Transverse colon (tissue), 4 donors: ENCODE measurements at regions of chr9 and their contacts with region 1.

Region 1: DNA sequence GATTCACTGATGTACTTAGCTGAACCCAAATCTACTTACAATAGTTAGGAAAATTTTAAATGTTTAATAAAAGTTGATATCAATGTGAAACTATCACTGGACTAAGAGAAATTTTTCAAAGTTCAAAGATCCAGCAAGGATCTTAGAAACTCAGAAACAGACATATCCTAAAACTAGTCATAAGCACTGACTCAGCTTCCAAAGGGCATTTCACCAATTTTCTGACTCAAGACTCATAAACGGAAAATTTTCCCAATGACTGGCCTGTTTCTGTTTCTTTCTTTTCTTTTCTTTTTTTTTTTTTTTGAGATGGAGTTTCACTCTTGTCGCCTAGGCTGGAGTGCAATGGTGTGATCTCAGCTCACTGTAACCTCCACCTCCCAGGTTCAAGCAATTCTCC is 66.6 kb downstream of the CDC14B start:
- DNase-seq: no peak
- H3K4me3 ChIP-seq: no peak overlapping the region
- H3K27ac ChIP-seq: peak overlapping the region in 2 of 4 donors; percentile 42 to 49
- H3K4me1 ChIP-seq: no peaks in the 10 kb centered on the region
- H3K27me3 ChIP-seq: no peaks in the 10 kb centered on the region
- CTCF ChIP-seq: no peak
- EP300 ChIP-seq: no peak
- POLR2A ChIP-seq: no peak

Region 2: DNA sequence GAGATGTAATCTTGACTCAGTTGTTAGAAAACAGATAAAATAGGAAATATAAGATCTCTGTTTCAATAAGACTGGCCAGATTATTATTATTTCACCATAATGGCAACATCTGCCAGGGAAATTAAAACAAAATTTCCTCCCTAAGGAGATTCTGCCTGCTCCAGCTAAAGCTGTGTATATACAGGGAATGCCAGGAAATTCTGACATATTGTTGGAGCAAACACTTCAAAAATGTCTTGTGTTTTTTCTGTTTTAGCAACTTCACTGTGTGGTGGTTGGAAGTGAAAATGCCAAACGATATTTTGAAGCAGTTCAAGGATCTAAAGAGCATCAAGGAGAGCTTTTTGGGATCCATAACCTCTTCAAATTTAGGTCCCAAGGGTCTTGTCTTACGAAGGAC is 586.8 kb before region 1 on chr9:
- in situ Hi-C with region 1: no loop called
- intact Hi-C with region 1: no loop called
- DNase-seq: no peak
- H3K4me3 ChIP-seq: no peak overlapping the region
- H3K27ac ChIP-seq: no peak overlapping the region
- H3K4me1 ChIP-seq: no peaks in the 10 kb centered on the region
- H3K27me3 ChIP-seq: no peaks in the 10 kb centered on the region
- CTCF ChIP-seq: no peak
- EP300 ChIP-seq: no peak
- POLR2A ChIP-seq: no peak

Region 3: GRCh38 chr9:96571681-96572080 is 18.6 kb after region 1 on chr9:
- in situ Hi-C with region 1: no loop called
- intact Hi-C with region 1: loop called (anchors 2 kb)
- DNase-seq: no peak
- H3K4me3 ChIP-seq: no peak overlapping the region
- H3K27ac ChIP-seq: no peak overlapping the region
- H3K4me1 ChIP-seq: peaks cover 0 to 10% (median 6%) of the 10 kb centered on the region in 4 donors
- H3K27me3 ChIP-seq: no peaks in the 10 kb centered on the region
- CTCF ChIP-seq: no peak
- EP300 ChIP-seq: no peak
- POLR2A ChIP-seq: no peak